ENCODE measurements at regions of chr12 and their contacts with region 1.

Region 1: DNA sequence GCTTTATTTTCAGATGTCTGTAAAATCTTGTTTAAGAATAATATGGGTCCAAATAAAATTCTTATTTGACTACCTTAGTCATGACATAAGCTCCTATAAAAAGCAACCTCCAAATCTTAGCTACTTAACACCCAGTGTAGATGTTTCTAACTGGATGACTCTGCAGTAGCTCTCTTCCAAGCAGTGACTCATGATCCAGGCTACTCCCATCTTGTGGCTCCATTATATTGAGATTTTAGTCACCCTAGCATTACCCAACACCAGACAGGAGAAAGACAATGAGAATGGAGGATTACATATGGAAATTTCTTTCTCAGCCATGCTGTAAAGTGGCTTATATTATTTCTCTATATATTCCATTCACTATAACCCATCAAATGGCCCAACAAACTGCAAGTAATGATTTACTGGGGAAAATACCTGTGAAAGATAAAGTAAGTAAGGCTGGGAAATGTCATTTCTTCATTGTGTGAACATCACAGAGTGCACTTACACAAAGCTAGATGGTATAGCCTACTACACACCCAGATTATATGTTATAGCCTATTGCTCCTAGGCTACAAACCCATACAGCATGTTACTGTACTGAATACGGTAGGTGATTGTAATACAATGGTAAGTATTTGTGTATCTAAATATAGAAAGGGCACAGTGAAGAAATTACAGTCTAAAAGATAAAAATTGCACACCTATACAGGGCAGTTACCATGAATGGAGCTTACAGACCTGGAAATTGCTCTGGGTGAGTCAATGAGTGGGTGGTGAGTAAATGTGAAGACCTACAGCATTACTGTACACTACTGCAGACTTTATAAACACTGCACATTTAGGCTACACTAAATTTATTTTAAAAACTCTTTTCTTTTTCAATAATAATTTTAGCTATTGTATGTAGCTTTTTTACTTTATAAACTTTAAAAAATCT is 163.2 kb downstream of the DYRK2 start:
- DNase-seq: no peak
- ATAC-seq: peak; percentile 82
- H3K4me3 Mint-ChIP-seq: no peak overlapping the region
- H3K27ac Mint-ChIP-seq: no peak overlapping the region
- H3K4me1 Mint-ChIP-seq: peaks cover 24% of the 10 kb centered on the region
- H3K27me3 Mint-ChIP-seq: no peaks in the 10 kb centered on the region

Region 2: DNA sequence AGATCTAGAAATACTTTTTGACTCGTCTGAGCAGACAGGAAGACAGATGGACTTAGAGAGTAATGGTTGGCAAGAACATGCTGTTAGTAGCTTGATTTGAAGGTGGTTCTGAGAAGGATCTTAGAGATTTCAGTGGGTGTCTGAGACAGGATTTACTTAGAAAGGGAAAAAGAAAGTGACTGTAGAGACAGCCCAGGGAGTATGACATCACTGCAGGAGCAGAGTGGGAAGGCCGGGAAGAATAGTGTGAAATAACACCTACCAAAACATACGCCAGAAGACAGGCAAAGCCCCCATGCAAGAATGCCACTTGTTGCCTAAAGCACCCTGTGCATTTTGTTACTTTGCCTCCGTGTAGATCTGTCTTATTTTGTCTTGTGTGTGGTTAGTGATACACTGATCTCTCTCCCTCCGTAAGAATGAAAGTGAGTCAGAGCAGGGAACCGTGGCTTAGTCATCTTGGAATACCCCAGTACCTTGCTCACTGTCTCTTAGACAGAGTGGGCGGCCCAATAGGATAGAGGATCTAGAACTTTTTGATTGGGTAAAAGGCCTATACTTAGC is 16.2 kb after region 1 on chr12:
- CTCF ChIA-PET with region 1: interaction called, 3 read pairs
- POLR2A ChIA-PET with region 1: no interaction called
- intact Hi-C with region 1: loop called in 1 of 2 experiments (anchors 2 kb)
- DNase-seq: peak; percentile 77
- ATAC-seq: peak; percentile 99
- H3K4me3 Mint-ChIP-seq: peak overlapping the region; percentile 17
- H3K27ac Mint-ChIP-seq: peak overlapping the region; percentile 72
- H3K4me1 Mint-ChIP-seq: peaks cover 22% of the 10 kb centered on the region
- H3K27me3 Mint-ChIP-seq: no peaks in the 10 kb centered on the region